Activated CD4-positive, alpha-beta T cell treated with anti-CD3 and anti-CD28 coated beads, Interleukin-2, amount 10 ng/mL, durations not matched to agents 7 days and 5 days (primary cell): ENCODE measurements at regions of chr17 and their contacts with region 1.

Region 1: GRCh38 chr17:75845049-75845860 is 1.1 kb upstream of the UNC13D start:
- DNase-seq: peak; percentile 67
- H3K4me3 Mint-ChIP-seq: peak overlapping the region; percentile 48
- H3K27ac Mint-ChIP-seq: peak overlapping the region; percentile 98
- H3K4me1 Mint-ChIP-seq: peaks cover 30% of the 10 kb centered on the region
- H3K27me3 Mint-ChIP-seq: no peaks in the 10 kb centered on the region

Region 2: GRCh38 chr17:75707131-75707571 is 138.1 kb before region 1 on chr17:
- CTCF ChIA-PET with region 1: no interaction called
- POLR2A ChIA-PET with region 1: no interaction called
- DNase-seq: no peak
- H3K4me3 Mint-ChIP-seq: no peak overlapping the region
- H3K27ac Mint-ChIP-seq: no peak overlapping the region
- H3K4me1 Mint-ChIP-seq: no peaks in the 10 kb centered on the region
- H3K27me3 Mint-ChIP-seq: peaks cover 2% of the 10 kb centered on the region

Region 3: GRCh38 chr17:75855310-75856081 is 10.2 kb after region 1 on chr17 and contains the start of gene WBP2:
- CTCF ChIA-PET with region 1: interaction called, 30 read pairs
- POLR2A ChIA-PET with region 1: interaction called, 7 read pairs
- DNase-seq: peak; percentile 99
- H3K4me3 Mint-ChIP-seq: no peak within 1 kb of the TSS
- H3K27ac Mint-ChIP-seq: peak within 1 kb of the TSS; percentile 93
- H3K4me1 Mint-ChIP-seq: peaks cover 36% of the 10 kb centered on the region
- H3K27me3 Mint-ChIP-seq: no peaks in the 10 kb centered on the region
- total RNA-seq, gene WBP2: 76.8 to 83.5 TPM

Region 4: GRCh38 chr17:75940724-75941441 is 95.6 kb after region 1 on chr17 and contains the start of gene FBF1:
- CTCF ChIA-PET with region 1: no interaction called
- POLR2A ChIA-PET with region 1: no interaction called
- DNase-seq: peak; percentile 92
- H3K4me3 Mint-ChIP-seq: peak within 1 kb of the TSS; percentile 92
- H3K27ac Mint-ChIP-seq: peak within 1 kb of the TSS; percentile 89
- H3K4me1 Mint-ChIP-seq: peaks cover 18% of the 10 kb centered on the region
- H3K27me3 Mint-ChIP-seq: no peaks in the 10 kb centered on the region
- total RNA-seq, gene FBF1: 21.7 to 23.5 TPM